Cardiac septum (tissue), 1 donor: ENCODE measurements at regions of chr15 and their contacts with region 1.

Region 1: GRCh38 chr15:98085003-98085639 is 124.6 kb downstream of the ARRDC4 start:
- DNase-seq: no peak

Region 2: GRCh38 chr15:97881346-97881982 is 203.7 kb before region 1 on chr15:
- intact Hi-C with region 1: no loop called
- DNase-seq: no peak

Region 3: GRCh38 chr15:97909291-97909891 is 175.7 kb before region 1 on chr15:
- intact Hi-C with region 1: loop called (anchors 2 kb)
- DNase-seq: peak; percentile 80

Region 4: DNA sequence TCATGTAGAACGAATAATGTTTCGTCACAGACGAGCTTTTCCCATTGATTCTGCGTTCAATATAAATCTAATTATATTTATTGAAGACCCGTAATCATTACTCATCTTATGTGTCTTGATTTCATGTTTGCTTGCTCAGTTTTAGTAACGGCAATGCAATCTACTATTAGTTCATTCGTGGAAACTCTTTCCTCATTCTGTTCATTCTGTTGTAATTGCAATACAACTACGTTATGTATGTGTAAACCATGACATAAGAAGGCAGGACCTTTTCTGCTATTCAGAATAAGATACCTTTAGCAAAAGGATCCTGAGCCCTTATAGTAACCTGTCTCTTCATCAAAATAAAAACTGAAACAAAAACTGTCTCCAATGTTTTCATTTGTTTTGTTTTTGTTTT is 131.4 kb before region 1 on chr15:
- intact Hi-C with region 1: loop called (anchors 5 kb)
- DNase-seq: no peak

Region 5: DNA sequence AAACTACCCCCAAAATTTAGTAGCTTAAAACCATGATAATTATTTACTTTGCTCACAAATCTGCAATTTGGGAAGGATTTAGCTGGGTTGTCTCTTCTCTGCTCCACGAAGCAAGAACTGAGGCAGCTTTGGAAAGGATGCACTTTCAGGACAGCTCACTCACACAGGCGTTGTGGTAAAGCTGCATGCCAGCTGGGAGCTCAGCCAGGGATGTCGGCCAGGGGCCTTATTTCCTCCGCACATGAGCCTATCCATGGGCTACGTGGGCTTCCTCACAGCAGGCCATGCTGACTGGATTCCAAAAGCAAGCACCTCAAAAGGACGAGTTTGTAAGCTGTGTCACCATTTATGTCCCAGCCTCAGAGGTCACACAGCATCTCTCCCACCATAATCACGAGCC is 261.9 kb after region 1 on chr15:
- intact Hi-C with region 1: no loop called
- DNase-seq: no peak

Region 6: GRCh38 chr15:99076552-99077308 is 991.6 kb after region 1 on chr15:
- intact Hi-C with region 1: no loop called
- DNase-seq: no peak